Cardiac septum (tissue), 1 donor: ENCODE measurements at regions of chr17 and their contacts with region 1.

Region 1: DNA sequence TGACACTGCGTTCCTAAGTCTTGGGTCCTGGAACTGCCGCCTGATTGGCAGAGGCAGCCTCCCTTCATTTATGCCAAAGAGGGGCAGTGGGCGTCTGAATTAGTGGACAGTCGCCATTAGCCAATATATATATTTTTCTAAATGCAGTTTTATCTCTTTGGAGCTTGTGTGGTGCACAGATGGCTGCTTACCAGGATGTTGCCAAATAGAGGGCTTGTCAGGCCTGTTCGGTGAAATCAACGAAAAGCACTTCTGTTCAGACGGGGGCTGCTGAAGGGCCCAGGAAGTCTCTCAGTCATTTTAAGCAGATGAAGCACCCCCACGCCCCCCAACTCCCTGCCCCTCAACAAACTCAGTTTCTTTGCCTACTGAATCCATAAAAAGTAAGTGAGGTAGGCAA is 66.0 kb downstream of the RAP1GAP2 start:
- DNase-seq: no peak

Region 2: GRCh38 chr17:2837147-2837561 is 25.0 kb before region 1 on chr17:
- intact Hi-C with region 1: no loop called
- DNase-seq: no peak

Region 3: GRCh38 chr17:2904152-2904551 is 42.0 kb after region 1 on chr17:
- intact Hi-C with region 1: loop called (anchors 5 kb)
- DNase-seq: peak; percentile 80